Heart right ventricle (tissue), 16 donors: ENCODE measurements at regions of chr6 and their contacts with region 1.

Region 1: DNA sequence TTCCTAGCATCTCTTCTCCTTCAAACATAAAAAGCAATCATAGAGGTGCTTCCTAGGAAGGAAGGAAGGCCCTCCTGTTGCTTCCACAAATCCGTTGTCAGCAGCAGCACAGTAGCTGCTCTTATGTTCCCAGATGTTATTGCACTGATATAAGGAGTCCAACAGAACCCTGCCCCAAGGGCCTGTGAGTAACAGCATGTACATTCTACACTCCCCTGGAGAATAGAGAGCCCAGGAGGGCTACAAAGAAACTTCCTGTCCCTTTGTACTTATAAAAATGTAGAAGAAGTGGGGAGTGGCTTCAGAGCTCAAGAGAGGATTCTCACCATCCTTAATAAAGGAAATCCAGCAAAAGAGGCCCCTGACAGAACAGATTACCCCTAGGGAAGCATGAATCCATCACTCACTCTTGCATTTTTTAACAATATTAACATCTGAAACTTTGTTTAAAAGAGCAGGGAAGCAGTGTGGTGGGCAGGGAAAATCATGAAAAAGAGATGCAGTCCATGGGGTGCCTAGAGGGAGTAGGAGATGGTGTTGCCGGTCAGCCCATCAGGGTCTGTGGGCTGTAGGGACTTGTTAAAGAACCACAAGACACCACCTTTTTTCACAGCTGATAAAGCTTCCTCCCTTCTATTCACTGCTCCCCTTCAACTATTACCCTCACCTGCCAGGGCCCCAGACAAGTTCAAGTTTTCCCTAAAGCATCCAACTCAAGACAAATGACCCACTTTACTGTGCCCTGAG is 104.5 kb upstream of the ADGRF1 start:
- DNase-seq: no peak
- ATAC-seq: peak in 6 of 8 donors; percentile 34 to 86 (median 60)
- H3K4me3 ChIP-seq: no peak overlapping the region
- H3K27ac ChIP-seq: peak overlapping the region in 5 of 10 donors; percentile 6 to 41 (median 40)
- H3K4me1 ChIP-seq: peaks cover 0 to 24% (median 10%) of the 10 kb centered on the region in 9 donors
- H3K27me3 ChIP-seq: no peaks in the 10 kb centered on the region
- CTCF ChIP-seq: no peak

Region 2: GRCh38 chr6:47073125-47074110 is 73.2 kb before region 1 on chr6:
- intact Hi-C with region 1: no loop called
- DNase-seq: no peak
- ATAC-seq: no peak
- H3K4me3 ChIP-seq: no peak overlapping the region
- H3K27ac ChIP-seq: no peak overlapping the region
- H3K4me1 ChIP-seq: peaks cover 0 to 20% (median 0%) of the 10 kb centered on the region in 9 donors
- H3K27me3 ChIP-seq: peaks cover 0 to 6% (median 0%) of the 10 kb centered on the region in 7 donors
- CTCF ChIP-seq: peak in 1 of 9 donors; percentile 8

Region 3: DNA sequence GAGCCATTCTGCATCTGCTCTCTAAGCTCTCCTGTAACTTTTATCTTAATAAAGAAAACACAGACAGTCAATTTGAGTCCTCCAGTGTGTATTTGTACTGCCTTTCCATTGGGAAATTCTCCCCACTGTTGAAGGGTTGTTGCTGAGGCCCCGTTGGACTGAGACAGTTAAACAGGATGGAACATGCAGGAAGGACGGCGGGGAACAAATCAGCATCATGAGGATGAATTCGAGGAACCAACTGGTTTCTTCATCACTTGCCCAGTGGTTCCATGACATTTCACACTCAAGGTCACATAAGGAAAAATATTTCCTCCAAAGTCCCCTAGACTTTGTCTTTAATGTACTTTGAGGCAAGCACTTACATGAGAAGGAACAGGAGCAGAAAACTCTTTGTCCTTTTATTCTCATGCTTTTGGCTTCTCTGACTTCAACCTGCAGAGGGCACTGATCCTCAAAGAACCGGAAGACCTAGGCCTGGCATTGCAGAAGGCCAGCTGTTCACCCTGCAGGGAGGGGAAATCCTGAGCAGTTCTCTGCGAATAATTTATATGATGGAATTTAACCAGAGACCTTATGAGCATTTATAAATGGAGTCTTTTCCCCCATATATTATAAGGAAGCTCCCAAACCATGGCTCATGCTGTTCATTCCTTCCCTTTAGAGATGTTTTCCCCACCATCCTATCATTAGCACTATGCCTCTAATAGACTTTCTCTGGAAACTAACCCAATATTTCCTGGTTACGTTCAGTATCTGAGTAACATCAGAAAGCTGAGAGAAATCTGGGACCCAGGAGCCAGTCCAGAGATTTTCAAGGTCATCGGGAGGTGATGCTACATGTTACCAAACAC is 49.3 kb before region 1 on chr6:
- intact Hi-C with region 1: loop called in 2 of 10 experiments (anchors 5 kb)
- DNase-seq: peak in 1 of 2 donors; percentile 75
- ATAC-seq: peak; percentile 79 to 94 (median 90)
- H3K4me3 ChIP-seq: no peak overlapping the region
- H3K27ac ChIP-seq: peak overlapping the region in 4 of 10 donors; percentile 7 to 32 (median 28)
- H3K4me1 ChIP-seq: peaks cover 0 to 39% (median 10%) of the 10 kb centered on the region in 9 donors
- H3K27me3 ChIP-seq: peaks cover 0 to 1% (median 0%) of the 10 kb centered on the region in 7 donors
- CTCF ChIP-seq: peak; percentile 52 to 81 (median 66)